ENCODE measurements at regions of chr10 and their contacts with region 1.

Region 1: DNA sequence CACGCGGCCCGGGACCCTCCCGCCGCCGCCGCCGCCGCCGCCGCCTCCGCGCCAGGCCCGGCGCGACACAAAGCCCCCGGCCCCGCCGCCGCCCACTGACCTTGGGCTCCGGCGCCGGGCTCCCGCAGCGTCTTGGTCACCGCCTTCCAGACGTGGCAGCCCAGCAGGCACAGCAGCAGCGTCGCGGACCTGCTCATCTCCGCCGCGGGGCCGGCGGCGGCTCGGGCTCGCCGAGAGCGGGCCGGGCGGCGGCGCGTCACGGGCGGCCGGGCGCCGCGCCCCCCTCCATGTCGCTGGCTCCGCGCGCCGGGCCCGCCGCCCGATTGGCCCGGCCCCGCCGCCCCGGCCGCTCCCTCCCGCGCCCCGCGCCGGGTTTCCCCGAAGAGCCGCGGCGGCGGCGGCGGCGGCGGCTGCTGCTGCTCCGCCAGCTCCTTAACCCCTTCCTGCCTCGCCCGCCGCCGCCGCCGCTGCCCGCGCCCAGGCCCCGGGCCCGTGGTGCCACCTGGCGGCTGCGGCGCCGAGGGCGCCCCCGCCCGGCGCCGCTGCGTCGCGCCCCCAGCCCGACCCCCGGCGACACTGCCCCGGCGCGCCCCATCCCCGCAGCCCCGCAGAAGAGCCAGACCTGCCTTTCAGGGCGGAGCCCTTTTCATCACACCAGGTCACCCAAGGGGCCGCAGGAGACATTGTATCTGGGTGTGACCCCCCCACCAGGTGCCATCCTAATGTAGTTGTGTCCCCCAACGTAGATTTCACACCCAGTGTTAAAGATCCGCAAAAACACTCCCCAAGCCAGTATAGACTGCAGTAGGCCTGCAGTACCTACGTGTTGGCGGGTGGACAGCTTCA is at the start of gene FAM171A1:
- DNase-seq: peak; percentile 73
- H3K4me3 ChIP-seq: peak within 1 kb of the TSS; percentile 55 to 86 (median 78)
- H3K27ac ChIP-seq: peak within 1 kb of the TSS; percentile 39 to 77 (median 74)
- H3K4me1 ChIP-seq: peaks cover 0 to 17% (median 8%) of the 10 kb centered on the region in 4 donors
- H3K27me3 ChIP-seq: no peaks in the 10 kb centered on the region
- CTCF ChIP-seq: no peak
- EP300 ChIP-seq: no peak
- POLR2A ChIP-seq: no peak
- total RNA-seq, gene FAM171A1: 4.3 to 9.7 (median 6.4) TPM

Region 2: GRCh38 chr10:14466257-14466656 is 904.8 kb before region 1 on chr10:
- intact Hi-C with region 1: no loop called
- DNase-seq: no peak
- H3K4me3 ChIP-seq: no peak overlapping the region
- H3K27ac ChIP-seq: no peak overlapping the region
- H3K4me1 ChIP-seq: peaks cover 0 to 8% (median 0%) of the 10 kb centered on the region in 4 donors
- H3K27me3 ChIP-seq: no peaks in the 10 kb centered on the region
- CTCF ChIP-seq: no peak
- EP300 ChIP-seq: no peak
- POLR2A ChIP-seq: no peak

Region 3: DNA sequence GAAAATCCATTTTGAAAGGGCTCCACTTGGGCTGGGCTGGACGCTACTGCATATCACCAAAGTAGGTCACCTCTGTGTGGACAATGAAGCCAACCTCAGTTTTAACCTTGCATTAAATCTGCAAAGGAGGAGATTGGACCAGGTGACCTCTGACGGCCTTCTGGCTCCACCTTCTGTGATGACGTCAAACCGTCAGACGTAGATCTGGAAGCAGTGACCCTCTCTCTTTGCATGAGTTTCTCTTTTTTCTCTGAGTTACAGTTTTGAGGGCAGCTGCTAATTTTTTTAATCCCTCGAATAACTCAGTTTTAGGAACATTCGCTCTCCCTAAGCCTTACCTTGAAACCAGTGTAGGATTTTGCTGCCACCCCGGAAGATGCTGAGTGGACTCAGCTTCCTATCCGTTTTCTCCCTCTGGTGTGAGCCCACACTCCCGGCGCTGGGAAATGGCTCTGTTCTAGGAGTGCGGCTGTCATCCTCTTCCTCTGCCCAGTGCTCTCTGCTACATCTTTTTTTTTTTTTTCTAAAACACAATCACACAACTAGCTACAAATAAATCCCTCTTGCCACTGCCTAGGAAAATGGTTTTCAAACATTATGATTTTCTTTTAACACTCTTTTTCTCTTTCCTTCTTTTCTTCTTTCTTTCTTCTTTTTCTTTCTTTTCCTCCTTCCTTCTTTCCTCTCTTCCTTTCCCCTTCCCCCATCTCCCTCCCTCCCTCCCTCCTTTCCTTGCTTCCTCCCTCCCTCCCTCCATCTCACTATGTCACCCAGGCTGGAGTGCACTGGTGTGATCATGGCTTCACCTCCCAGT is 174.9 kb before region 1 on chr10:
- intact Hi-C with region 1: no loop called
- DNase-seq: peak; percentile 56
- H3K4me3 ChIP-seq: peak overlapping the region in 1 of 4 donors; percentile 2
- H3K27ac ChIP-seq: no peak overlapping the region
- H3K4me1 ChIP-seq: no peaks in the 10 kb centered on the region
- H3K27me3 ChIP-seq: no peaks in the 10 kb centered on the region
- CTCF ChIP-seq: no peak
- EP300 ChIP-seq: no peak
- POLR2A ChIP-seq: no peak

Region 4: GRCh38 chr10:15209827-15210509 is 161.1 kb before region 1 on chr10:
- intact Hi-C with region 1: loop called (anchors 1 kb)
- DNase-seq: peak; percentile 88
- H3K4me3 ChIP-seq: no peak overlapping the region
- H3K27ac ChIP-seq: no peak overlapping the region
- H3K4me1 ChIP-seq: peaks cover 0 to 10% (median 3%) of the 10 kb centered on the region in 4 donors
- H3K27me3 ChIP-seq: no peaks in the 10 kb centered on the region
- CTCF ChIP-seq: peak; percentile 52 to 85 (median 75)
- EP300 ChIP-seq: no peak
- POLR2A ChIP-seq: no peak

Region 5: GRCh38 chr10:15223174-15223573 is 147.9 kb before region 1 on chr10:
- intact Hi-C with region 1: no loop called
- DNase-seq: no peak
- H3K4me3 ChIP-seq: no peak overlapping the region
- H3K27ac ChIP-seq: no peak overlapping the region
- H3K4me1 ChIP-seq: no peaks in the 10 kb centered on the region
- H3K27me3 ChIP-seq: no peaks in the 10 kb centered on the region
- CTCF ChIP-seq: no peak
- EP300 ChIP-seq: no peak
- POLR2A ChIP-seq: no peak

Region 6: DNA sequence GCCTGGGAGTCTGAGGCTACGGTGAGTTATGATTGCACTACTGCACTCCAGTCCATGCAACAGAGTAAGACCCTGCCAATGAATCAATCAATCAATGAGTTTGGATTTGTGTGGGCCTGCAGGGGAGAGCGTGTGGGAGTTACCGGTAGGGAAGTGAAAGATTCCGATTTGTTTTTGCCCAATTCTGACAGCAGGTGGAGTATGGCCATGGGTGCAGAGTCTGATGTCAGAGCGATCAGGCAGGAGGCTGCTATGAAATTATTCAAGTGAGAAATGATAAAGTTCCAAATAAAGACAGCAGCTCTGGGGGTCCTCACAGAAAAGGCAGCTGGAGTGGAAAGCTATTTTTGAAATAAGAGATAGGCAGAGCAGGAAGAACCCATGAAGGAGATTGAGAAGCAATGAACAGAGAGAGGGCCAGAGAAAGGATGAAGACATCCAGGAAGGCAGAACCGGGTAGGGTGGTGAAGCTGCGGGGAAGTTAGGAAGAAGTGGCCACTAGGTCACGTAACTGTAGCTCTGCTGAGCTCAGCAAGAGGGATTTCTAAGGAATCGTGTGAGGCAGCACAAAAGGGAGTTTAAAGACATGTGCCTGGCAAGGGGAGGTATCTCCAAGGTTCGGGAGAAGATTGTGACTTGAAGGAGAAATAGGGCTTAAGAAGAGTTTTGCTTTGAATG is 108.9 kb before region 1 on chr10:
- intact Hi-C with region 1: loop called (anchors 2 kb)
- DNase-seq: peak; percentile 60
- H3K4me3 ChIP-seq: no peak overlapping the region
- H3K27ac ChIP-seq: no peak overlapping the region
- H3K4me1 ChIP-seq: no peaks in the 10 kb centered on the region
- H3K27me3 ChIP-seq: no peaks in the 10 kb centered on the region
- CTCF ChIP-seq: peak in 3 of 4 experiments; percentile 25 to 34 (median 32)
- EP300 ChIP-seq: no peak
- POLR2A ChIP-seq: no peak

Region 7: DNA sequence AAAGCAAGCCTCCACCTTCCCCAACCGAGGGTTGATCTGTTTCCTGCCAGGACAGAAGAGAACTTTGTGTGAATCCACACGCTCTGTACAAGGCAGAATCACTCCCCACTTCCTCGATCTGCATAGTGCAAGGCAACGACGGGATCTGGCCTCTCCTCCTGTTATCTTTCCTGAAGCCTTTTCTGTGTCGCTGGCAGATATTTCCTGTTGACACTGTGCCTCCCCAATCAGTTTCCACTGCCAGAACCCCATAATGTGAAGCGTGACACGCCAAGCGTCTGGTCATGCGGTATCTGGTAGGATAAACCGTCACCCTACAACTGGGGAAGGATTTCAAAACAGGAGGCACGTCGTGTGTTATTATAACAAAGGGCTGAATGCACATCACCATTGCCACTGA is 57.2 kb before region 1 on chr10:
- intact Hi-C with region 1: loop called (anchors 1 kb)
- DNase-seq: peak; percentile 73
- H3K4me3 ChIP-seq: peak overlapping the region in 2 of 4 donors; percentile 11 to 25
- H3K27ac ChIP-seq: peak overlapping the region in 3 of 4 donors; percentile 25 to 69 (median 46)
- H3K4me1 ChIP-seq: peaks cover 0 to 38% (median 18%) of the 10 kb centered on the region in 4 donors
- H3K27me3 ChIP-seq: no peaks in the 10 kb centered on the region
- CTCF ChIP-seq: no peak
- EP300 ChIP-seq: no peak
- POLR2A ChIP-seq: no peak

Region 8: GRCh38 chr10:15563246-15563645 is 192.2 kb after region 1 on chr10:
- intact Hi-C with region 1: no loop called
- DNase-seq: no peak
- H3K4me3 ChIP-seq: no peak overlapping the region
- H3K27ac ChIP-seq: no peak overlapping the region
- H3K4me1 ChIP-seq: no peaks in the 10 kb centered on the region
- H3K27me3 ChIP-seq: no peaks in the 10 kb centered on the region
- CTCF ChIP-seq: no peak
- EP300 ChIP-seq: no peak
- POLR2A ChIP-seq: no peak